ENCODE measurements at regions of chr6 and their contacts with region 1.

Region 1: DNA sequence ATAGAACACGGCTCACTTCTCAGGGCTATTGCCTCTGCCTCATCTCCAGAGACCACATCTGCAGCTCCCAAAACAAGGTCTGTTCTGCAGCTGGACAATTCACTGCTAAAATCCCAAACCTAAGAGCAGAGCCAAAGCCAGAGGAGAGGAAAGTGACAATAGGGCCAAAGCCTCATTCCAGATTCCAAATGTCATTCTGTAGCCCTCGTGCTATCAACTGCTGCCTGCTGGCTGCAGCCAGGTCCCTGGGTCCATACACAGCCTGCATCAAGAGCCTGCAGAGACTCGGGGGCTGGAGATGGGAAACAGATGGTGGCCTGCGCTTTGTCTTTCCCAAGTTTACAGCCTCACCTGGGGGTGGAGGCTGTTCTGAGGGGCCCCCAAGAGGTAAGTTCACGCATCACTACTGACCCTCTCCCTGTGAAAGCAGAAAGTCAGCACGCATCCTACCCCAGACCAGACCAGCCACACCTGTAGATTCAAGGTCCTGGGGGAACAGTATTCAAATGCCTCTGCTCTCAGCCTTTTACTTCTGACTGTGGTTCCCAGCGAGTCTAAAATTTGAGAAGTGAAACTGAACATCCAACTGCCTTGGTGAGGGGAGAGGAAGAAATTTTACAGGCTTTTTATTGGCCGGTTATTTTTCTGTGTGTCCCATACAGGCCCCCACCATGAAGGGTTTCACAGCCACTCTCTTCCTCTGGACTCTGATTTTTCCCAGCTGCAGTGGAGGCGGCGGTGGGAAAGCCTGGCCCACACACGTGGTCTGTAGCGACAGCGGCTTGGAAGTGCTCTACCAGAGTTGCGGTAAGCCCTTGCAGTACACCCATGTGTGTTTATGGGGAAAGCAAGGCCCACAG is at the start of gene LY86:
- DNase-seq: peak; percentile 62
- CTCF ChIP-seq: no peak

Region 2: GRCh38 chr6:6575143-6575542 is 13.2 kb before region 1 on chr6:
- CTCF ChIA-PET with region 1: interaction called, 21 read pairs
- POLR2A ChIA-PET with region 1: interaction called, 3 read pairs
- DNase-seq: no peak
- CTCF ChIP-seq: no peak

Region 3: DNA sequence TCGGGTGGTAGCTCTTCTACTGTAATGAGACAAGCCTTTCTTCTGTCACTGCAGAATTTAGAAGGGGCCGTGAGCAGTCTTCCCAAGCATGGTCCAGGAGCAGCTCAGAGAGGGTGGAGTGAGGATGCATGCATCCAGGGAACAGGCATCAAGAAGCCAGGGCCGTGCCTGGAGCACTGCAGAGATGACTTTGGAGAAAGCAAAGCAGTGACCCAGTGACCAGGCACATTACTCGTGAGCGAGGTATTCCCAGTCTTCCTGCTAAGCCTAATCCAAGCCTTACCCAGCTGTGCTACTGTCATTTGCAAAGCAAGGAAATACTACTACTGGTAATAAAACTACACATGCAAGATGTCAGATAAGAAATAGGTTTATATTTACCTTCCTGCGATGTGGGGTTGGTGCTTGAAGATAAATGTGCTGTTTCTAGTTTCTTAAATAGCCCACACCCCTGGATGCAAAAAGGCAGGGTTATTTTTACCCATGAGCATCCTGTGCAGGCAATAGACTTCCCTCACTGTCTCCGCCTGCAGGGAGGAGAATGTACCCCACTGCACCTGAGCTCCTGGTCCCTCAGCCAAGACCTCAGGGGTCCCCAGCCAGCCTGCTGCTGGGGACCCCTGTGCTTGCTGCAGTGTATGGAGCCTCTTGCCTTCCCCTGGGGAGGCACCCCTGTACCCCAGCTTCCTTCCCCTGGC is 661.8 kb after region 1 on chr6:
- CTCF ChIA-PET with region 1: no interaction called
- POLR2A ChIA-PET with region 1: interaction called, 11 read pairs
- DNase-seq: no peak
- CTCF ChIP-seq: no peak